Posterior vena cava (tissue), 2 donors: ENCODE measurements at regions of chr13 and their contacts with region 1.

Region 1: GRCh38 chr13:77026818-77027585 is at the start of gene FBXL3:
- DNase-seq: peak; percentile 96
- total RNA-seq, gene FBXL3: 75.7 to 76.2 TPM

Region 2: DNA sequence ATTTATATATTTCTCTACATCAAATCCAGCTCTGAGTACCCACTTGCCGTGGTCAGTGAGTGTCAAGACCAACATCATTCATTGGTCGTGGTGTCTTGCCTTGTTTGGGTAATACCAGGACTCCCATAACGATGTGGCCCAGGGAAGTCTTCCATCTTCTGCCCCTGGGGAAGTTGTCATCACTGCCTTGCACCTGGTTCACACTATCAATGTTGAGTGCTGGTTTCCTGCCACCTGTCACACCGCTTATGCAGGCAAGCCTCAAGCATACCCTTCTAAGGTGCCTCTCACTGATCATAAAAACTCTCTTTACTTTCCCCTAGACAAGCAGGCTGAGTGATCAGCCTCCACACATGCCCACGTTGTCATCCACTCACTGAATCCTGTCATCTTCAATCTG is 523.2 kb before region 1 on chr13:
- intact Hi-C with region 1: no loop called
- DNase-seq: no peak

Region 3: DNA sequence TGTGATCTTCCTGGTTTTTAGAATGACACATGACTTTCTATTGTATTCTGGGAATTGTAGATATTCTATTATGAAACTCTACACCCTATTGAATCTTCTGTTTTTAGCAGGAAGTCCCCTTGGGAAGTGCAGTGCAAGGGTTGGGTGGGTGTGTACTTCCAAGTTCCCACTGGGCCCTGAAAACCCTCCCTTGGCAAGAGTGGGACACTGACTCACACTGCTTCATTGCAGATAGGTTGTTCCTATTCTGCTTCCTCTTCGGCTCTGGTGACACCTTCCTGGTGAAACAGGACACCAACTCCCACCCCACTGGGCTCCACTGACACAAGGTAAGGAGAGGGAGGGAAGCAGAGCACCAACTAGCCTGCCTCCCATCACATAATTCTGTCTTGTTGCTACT is 262.6 kb before region 1 on chr13:
- intact Hi-C with region 1: no loop called
- DNase-seq: peak; percentile 84

Region 4: DNA sequence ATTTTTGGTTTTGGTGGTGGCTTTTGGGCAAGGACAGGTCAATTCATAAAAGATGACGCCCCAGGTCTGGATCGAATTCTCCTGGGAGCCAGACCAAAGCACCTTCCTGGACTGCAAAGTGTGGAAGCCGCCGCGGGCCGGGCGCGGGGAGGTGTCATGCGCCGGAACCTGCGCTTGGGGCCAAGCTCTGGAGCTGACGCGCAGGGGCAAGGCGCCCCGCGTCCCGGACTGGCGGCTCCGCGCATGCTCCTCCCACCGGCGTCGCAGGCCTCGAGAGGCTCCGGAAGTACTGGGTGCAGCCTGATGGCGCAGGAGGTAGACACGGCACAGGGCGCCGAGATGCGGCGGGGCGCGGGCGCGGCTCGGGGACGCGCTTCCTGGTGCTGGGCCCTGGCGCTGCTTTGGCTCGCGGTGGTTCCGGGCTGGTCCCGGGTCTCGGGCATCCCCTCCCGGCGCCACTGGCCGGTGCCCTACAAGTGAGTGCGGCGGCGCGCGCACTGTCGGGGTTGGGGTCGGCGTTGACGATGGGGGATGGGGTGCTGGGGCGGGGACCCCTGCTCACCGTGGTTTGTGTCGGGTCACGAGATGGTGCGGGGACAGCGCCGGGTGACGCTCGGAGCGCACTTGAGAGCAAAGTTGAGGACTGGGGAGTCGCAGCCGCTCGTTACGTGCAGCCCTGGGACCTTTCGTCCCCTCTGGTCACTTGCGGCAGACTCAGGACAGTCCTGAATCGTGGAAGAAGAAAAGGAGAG is 35.0 kb before region 1 on chr13 and contains the start of gene CLN5:
- intact Hi-C with region 1: loop called in 1 of 2 experiments (anchors 2 kb)
- DNase-seq: peak; percentile 98
- total RNA-seq, gene CLN5: 22.0 to 40.2 TPM